ENCODE measurements at regions of chr11 and their contacts with region 1.

Region 1: DNA sequence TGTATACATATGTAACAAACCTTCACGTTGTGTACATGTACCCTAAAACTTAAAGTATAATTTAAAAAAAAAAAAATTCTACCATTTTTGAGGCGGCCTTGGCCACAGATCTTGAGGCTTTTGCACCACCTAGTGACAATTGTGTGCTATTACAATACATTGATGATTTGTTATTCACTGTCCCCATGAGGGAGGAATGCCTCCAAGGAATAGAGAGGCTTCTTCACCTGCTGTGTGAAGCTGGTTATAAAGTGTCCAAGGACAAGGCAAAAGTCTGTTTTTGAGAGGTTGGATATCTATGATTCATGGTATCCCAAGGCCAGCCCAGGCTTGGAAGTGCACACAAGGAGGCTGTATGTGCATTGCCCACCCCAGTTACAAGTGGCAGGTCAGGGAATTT is 30.7 kb downstream of the SLC22A25 start:
- DNase-seq: no peak
- ATAC-seq: no peak
- H3K4me3 Mint-ChIP-seq: no peak overlapping the region
- H3K27ac Mint-ChIP-seq: no peak overlapping the region
- H3K4me1 Mint-ChIP-seq: no peaks in the 10 kb centered on the region; the same call in 1 of the 2 replicates
- H3K27me3 Mint-ChIP-seq: peaks cover 12% of the 10 kb centered on the region
- CTCF ChIP-seq: peak; percentile 28; the same call in 1 of the 2 replicates

Region 2: GRCh38 chr11:63132985-63133775 is 79.6 kb before region 1 on chr11:
- CTCF ChIA-PET with region 1: interaction called, 11 read pairs
- POLR2A ChIA-PET with region 1: no interaction called
- DNase-seq: no peak
- ATAC-seq: no peak
- H3K4me3 Mint-ChIP-seq: no peak overlapping the region
- H3K27ac Mint-ChIP-seq: no peak overlapping the region
- H3K4me1 Mint-ChIP-seq: no peaks in the 10 kb centered on the region
- H3K27me3 Mint-ChIP-seq: peaks cover 52% of the 10 kb centered on the region
- CTCF ChIP-seq: no peak

Region 3: GRCh38 chr11:63289658-63290057 is 76.9 kb after region 1 on chr11:
- CTCF ChIA-PET with region 1: no interaction called
- POLR2A ChIA-PET with region 1: no interaction called
- DNase-seq: no peak
- ATAC-seq: no peak
- H3K4me3 Mint-ChIP-seq: no peak overlapping the region
- H3K27ac Mint-ChIP-seq: no peak overlapping the region
- H3K4me1 Mint-ChIP-seq: no peaks in the 10 kb centered on the region
- H3K27me3 Mint-ChIP-seq: peaks cover 25% of the 10 kb centered on the region
- CTCF ChIP-seq: no peak

Measured in WTC11 (cell line).